ENCODE measurements at regions of chrX and their contacts with region 1.

Region 1: GRCh38 chrX:107493142-107493541 is 43.7 kb downstream of the FRMPD3 start:
- DNase-seq: no peak
- H3K4me3 ChIP-seq: no peak overlapping the region
- H3K27ac ChIP-seq: no peak overlapping the region
- H3K4me1 ChIP-seq: no peaks in the 10 kb centered on the region
- H3K27me3 ChIP-seq: no peaks in the 10 kb centered on the region
- CTCF ChIP-seq: no peak

Region 2: DNA sequence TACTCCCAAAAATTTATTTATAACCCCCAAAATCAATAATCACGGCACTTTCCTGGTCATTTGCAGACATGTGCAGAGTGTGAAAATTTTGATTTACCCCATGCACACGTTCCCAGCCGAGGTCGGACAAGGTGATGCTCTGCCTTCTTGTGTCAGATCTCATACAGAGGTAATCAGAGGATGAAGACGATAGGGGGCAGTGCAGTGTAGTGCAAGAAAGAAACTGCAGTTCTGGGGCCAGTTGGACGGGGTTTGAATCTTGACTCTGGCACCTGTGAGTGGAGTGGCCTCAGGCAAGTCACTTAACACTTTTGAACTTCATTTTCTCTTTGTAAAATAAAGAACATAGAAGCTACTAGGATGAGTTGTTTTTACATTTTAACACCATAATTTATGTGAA is 44.7 kb after region 1 on chrX:
- CTCF ChIA-PET with region 1: interaction called, 15 read pairs
- POLR2A ChIA-PET with region 1: no interaction called
- intact Hi-C with region 1: no loop called
- DNase-seq: peak; percentile 21
- H3K4me3 ChIP-seq: no peak overlapping the region
- H3K27ac ChIP-seq: no peak overlapping the region
- H3K4me1 ChIP-seq: no peaks in the 10 kb centered on the region
- H3K27me3 ChIP-seq: no peaks in the 10 kb centered on the region
- CTCF ChIP-seq: peak; percentile 62

Measured in A673 (cell line).